ENCODE measurements at regions of chr13 and their contacts with region 1.

Region 1: DNA sequence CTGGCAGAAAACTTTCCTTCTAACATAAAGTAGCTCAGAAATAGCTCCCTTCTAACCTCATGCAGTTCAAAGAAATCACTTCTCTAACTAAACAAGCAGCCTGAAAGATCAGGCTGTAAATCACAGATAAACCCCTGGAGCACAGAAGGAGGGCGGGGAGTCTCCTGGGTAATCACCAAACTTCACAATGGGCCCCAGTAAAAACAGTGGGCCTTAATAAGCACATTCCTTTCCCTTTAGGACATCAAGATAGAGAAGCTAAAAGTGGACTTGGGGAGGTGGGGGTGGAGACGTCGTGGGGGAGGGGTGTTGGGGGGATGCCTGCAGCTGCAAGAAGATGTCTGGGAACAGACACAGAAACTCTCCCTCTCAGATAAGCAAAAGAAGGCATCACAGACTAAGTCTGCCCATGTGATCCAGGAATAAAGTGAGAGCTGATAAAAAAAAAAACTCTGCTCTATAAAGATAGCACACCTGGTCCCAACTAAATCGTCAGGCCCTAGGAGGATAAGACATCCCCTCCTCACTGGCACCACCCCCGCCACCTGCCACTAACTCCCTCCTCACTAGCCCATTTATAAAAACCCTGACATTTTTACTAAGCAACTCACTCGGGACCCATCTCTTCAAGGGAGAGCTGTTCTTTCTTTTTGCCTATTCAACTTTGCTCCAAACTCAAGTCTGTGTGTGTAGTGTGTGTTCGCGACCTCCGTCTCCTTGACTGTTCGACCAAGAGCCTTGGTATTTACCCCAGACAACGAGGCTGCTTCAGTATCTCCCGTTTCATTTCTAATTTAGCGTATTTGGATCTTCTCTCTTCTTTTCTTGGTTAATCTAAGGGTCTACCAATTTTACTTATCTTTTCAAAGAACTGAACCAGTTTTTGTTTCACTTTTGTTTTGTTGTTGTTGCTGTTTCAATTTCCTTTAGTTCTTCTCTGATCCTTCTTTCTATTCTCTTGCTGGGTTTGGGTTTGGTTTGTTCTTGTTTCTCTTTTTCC is 31.7 kb downstream of the DNAJC15 start:
- DNase-seq: peak; percentile 75
- ATAC-seq: peak; percentile 37
- H3K4me3 ChIP-seq: peak overlapping the region in 1 of 3 experiments; percentile 29; a peak in 2 of 6 replicates
- H3K27ac ChIP-seq: peak overlapping the region; percentile 52
- H3K4me1 ChIP-seq: peaks cover 69% of the 10 kb centered on the region
- H3K27me3 ChIP-seq: no peaks in the 10 kb centered on the region
- CTCF ChIP-seq: no peak
- EP300 ChIP-seq: no peak
- POLR2A ChIP-seq: no peak
- RAD21 ChIP-seq: no peak

Region 2: DNA sequence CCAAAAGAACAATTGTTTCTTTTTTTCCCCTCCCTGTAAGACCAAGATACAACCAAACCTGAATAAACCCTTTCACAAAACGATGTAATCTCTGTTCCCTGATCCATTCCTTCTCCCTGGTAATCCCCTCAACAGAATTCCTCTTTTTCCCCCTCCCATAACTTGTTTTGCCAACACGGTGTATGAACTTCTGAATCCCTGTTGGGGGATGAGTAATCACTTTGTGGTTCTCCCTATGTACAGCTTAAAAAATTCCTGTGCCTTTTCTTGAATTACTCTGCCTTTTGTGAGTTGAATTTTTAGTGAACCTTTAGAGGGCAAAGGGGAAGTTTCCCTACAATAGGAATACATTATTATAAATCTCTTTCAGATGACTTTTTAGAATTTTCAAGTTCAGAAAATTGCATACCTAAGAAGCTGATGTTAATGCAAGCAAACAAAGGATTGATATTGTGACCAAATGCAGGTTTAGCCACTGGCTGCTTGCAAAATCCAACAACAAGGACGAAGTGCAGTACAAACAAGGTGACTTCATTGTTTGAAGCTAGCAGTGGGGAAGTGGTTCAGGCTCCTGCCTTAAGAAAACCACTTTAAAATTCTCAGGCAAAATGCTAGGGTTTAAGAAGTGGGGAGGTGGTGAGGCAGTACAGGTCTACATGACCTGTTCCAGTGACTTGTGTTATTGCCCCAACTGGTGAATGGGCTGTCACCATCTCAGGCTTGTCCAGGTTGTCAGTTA is 48.0 kb before region 1 on chr13:
- CTCF ChIA-PET with region 1: no interaction called
- POLR2A ChIA-PET with region 1: no interaction called
- in situ Hi-C with region 1: no loop called
- intact Hi-C with region 1: loop called (anchors 5 kb)
- DNase-seq: peak; percentile 52
- ATAC-seq: no peak; the same call in 2 of the 3 replicates
- H3K4me3 ChIP-seq: no peak overlapping the region
- H3K27ac ChIP-seq: no peak overlapping the region
- H3K4me1 ChIP-seq: peaks cover 34% of the 10 kb centered on the region
- H3K27me3 ChIP-seq: no peaks in the 10 kb centered on the region
- CTCF ChIP-seq: no peak
- EP300 ChIP-seq: no peak
- POLR2A ChIP-seq: no peak
- RAD21 ChIP-seq: no peak

Region 3: DNA sequence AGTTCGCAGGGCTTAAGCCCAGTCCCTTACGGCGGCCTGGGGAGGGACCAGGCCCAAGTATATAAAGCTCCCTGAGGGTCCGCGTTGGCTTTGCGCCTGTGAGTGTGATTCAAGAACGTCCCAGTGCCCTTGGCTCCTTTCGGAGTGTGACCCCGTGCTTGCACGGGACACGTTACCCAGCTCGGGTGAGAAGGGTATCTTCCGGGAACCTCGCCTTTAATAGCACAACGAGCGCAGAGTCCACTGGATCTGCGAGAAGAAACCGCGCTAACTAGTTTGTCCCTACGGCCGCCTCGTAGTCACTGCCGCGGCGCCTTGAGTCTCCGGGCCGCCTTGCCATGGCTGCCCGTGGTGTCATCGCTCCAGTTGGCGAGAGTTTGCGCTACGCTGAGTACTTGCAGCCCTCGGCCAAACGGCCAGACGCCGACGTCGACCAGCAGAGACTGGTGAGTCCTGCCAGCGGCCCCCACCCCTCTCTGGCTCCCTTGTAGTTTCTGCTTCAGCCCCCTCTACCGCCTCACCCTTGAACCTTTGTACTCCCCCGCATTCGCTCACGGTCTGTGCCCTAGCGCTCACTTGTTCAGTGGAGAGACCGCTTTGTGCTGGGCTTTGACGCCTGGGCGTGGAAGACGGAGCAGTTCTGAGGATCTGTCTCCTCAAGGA is 31.7 kb before region 1 on chr13 and contains the start of gene DNAJC15:
- CTCF ChIA-PET with region 1: no interaction called
- POLR2A ChIA-PET with region 1: interaction called, 12 read pairs
- in situ Hi-C with region 1: no loop called
- intact Hi-C with region 1: loop called (anchors 1 kb)
- DNase-seq: peak; percentile 76
- ATAC-seq: peak; percentile 96
- H3K4me3 ChIP-seq: peak within 1 kb of the TSS; percentile 78 to 100 (median 78)
- H3K27ac ChIP-seq: peak within 1 kb of the TSS; percentile 86
- H3K4me1 ChIP-seq: peaks cover 32% of the 10 kb centered on the region
- H3K27me3 ChIP-seq: no peaks in the 10 kb centered on the region; a peak in 2 of 5 replicates
- CTCF ChIP-seq: peak; percentile 44
- EP300 ChIP-seq: no peak
- POLR2A ChIP-seq: peak; percentile 83 to 84
- RAD21 ChIP-seq: no peak
- total RNA-seq, gene DNAJC15: 21.5 and 23.0 TPM in 2 replicates

Region 4: GRCh38 chr13:43072394-43072793 is 17.3 kb after region 1 on chr13:
- CTCF ChIA-PET with region 1: no interaction called
- POLR2A ChIA-PET with region 1: no interaction called
- in situ Hi-C with region 1: no loop called
- intact Hi-C with region 1: no loop called
- DNase-seq: no peak
- ATAC-seq: no peak
- H3K4me3 ChIP-seq: no peak overlapping the region
- H3K27ac ChIP-seq: no peak overlapping the region
- H3K4me1 ChIP-seq: peaks cover 9% of the 10 kb centered on the region; the same call in 1 of the 2 replicates
- H3K27me3 ChIP-seq: no peaks in the 10 kb centered on the region
- CTCF ChIP-seq: no peak
- EP300 ChIP-seq: no peak
- POLR2A ChIP-seq: no peak
- RAD21 ChIP-seq: no peak

Measured in HepG2 (cell line).